ENCODE measurements at regions of chr19 and their contacts with region 1.

Region 1: GRCh38 chr19:19663256-19664038 is at the start of gene ATP13A1:
- DNase-seq: peak; percentile 90
- ATAC-seq: peak; percentile 78
- H3K4me3 Mint-ChIP-seq: peak within 1 kb of the TSS; percentile 92
- H3K27ac Mint-ChIP-seq: peak within 1 kb of the TSS; percentile 98
- H3K4me1 Mint-ChIP-seq: peaks cover 44% of the 10 kb centered on the region
- H3K27me3 Mint-ChIP-seq: no peaks in the 10 kb centered on the region
- CTCF ChIP-seq: no peak
- total RNA-seq, gene ATP13A1: 125 and 135 TPM in 2 replicates

Region 2: GRCh38 chr19:19063183-19064097 is 600.0 kb before region 1 on chr19 and contains the start of gene SLC25A42:
- CTCF ChIA-PET with region 1: no interaction called
- POLR2A ChIA-PET with region 1: no interaction called
- intact Hi-C with region 1: loop called (anchors 10 kb)
- DNase-seq: peak; percentile 96
- ATAC-seq: peak; percentile 89
- H3K4me3 Mint-ChIP-seq: peak within 1 kb of the TSS; percentile 88
- H3K27ac Mint-ChIP-seq: peak within 1 kb of the TSS; percentile 89
- H3K4me1 Mint-ChIP-seq: peaks cover 52% of the 10 kb centered on the region
- H3K27me3 Mint-ChIP-seq: no peaks in the 10 kb centered on the region
- CTCF ChIP-seq: no peak
- total RNA-seq, gene SLC25A42: 14.2 and 17.5 TPM in 2 replicates

Region 3: DNA sequence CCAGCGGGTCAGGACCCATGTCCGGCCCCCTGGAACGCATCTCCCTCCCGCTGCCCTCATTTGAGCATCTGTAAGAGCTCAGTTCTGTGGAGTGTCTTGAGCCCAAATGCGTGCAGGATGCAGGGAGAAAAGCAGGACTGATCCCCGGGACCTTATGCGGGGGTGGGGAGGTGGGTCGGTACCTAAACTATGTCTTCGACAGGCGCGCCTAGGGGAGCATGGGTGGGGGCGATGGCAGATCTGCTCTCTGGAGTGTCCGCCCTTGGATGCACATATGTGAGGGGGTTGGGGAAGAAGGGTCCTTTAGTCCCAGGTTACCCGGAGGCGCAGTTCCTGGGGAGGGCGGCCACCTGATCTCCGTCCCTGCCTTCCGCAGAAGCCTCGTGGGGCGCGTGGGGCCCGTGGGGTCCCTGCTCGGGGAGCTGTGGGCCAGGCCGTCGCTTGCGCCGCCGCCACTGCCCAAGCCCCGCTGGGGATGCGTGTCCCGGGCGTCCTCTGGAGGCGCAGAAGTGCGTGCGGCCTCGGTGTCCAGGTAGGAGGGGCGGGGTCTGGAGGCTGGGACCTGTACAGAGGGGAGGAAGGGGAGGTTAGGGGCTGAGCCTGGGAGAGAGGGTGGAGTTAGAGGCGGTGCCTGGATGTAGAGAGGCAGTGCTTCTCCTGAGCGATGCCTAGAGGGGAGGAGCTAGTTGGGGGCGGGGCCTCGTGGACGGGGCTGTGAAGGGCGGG is 122.6 kb before region 1 on chr19:
- CTCF ChIA-PET with region 1: no interaction called
- POLR2A ChIA-PET with region 1: no interaction called
- intact Hi-C with region 1: no loop called
- DNase-seq: peak; percentile 55
- ATAC-seq: peak; percentile 78
- H3K4me3 Mint-ChIP-seq: peak overlapping the region; percentile 68
- H3K27ac Mint-ChIP-seq: no peak overlapping the region
- H3K4me1 Mint-ChIP-seq: peaks cover 28% of the 10 kb centered on the region
- H3K27me3 Mint-ChIP-seq: peaks cover 20% of the 10 kb centered on the region
- CTCF ChIP-seq: no peak

Region 4: DNA sequence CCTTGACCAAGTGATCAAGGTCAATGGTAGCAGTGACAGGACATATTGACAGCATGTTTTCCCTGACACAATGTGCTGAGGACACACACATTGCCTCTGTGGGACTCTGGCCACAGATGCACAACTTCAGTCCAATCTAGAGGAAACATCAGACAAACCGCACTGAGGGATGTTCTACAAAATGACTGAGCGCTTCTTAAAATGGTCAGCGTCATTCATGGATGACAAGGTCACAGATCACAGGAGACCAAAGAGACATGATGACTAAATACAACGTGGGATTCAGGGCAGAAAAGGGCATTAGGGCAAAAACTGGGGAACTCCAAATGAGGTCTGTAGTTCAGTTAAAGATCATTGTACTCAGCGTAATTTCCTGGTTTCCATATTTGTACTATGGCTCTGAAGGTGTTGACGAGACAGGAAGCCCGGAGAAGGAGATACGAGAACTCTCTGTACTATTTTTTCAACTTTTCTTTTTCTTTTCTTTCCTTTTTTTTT is 65.6 kb before region 1 on chr19:
- CTCF ChIA-PET with region 1: no interaction called
- POLR2A ChIA-PET with region 1: interaction called, 5 read pairs
- intact Hi-C with region 1: loop called (anchors 2 kb)
- DNase-seq: no peak
- ATAC-seq: peak; percentile 80
- H3K4me3 Mint-ChIP-seq: peak overlapping the region; percentile 62
- H3K27ac Mint-ChIP-seq: peak overlapping the region; percentile 89
- H3K4me1 Mint-ChIP-seq: peaks cover 67% of the 10 kb centered on the region
- H3K27me3 Mint-ChIP-seq: no peaks in the 10 kb centered on the region
- CTCF ChIP-seq: no peak

Region 5: DNA sequence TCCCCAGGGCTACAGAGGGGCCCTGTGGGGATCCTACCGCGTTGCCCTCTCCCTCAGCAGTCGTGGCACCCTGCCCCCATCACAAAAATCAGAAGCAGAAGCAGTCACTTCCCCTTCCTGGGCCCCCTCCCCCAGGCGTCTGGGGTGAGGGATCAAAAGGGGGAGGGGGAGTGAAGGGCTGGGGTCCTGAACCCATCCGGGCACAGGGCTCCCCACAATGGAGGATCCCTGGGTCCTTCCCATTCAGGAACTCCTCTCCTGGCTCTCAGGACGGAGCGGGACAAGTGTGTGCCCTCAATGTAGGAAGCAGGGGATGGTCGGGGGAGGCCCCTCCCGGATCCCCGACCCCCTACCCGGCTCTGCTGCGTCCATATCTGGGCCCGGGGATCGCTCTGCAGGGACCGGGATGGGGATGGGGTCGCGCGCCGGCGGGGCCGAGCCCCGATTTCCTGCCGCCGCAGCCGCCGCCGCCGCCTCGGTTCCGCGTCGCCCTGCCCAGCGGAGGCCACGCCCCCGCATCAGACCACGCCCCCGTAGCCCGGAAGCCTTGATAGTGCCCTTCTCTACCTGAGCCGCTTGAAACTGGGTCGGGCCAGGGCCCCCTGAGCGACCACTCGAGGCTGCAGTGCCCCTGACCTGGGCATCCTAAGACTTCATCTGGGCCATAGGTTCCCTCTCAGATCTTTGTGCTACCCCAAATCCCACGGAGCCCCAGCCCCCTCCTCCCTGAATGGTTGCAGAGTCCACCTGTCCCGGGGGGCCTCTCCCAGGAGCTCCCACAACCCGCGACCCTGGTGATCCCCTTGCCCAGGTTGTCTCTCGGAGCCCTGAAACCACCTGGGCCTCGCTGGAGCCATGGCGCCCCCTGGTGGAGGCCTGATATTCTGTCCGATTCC is 20.0 kb before region 1 on chr19 and contains the start of gene GMIP:
- CTCF ChIA-PET with region 1: interaction called, 6 read pairs
- POLR2A ChIA-PET with region 1: interaction called, 12 read pairs
- intact Hi-C with region 1: loop called (anchors 1 kb)
- DNase-seq: peak; percentile 89
- ATAC-seq: peak; percentile 89
- H3K4me3 Mint-ChIP-seq: peak within 1 kb of the TSS; percentile 99
- H3K27ac Mint-ChIP-seq: peak within 1 kb of the TSS; percentile 96
- H3K4me1 Mint-ChIP-seq: peaks cover 19% of the 10 kb centered on the region
- H3K27me3 Mint-ChIP-seq: no peaks in the 10 kb centered on the region
- CTCF ChIP-seq: no peak
- total RNA-seq, gene GMIP: 129 and 130 TPM in 2 replicates

Region 6: DNA sequence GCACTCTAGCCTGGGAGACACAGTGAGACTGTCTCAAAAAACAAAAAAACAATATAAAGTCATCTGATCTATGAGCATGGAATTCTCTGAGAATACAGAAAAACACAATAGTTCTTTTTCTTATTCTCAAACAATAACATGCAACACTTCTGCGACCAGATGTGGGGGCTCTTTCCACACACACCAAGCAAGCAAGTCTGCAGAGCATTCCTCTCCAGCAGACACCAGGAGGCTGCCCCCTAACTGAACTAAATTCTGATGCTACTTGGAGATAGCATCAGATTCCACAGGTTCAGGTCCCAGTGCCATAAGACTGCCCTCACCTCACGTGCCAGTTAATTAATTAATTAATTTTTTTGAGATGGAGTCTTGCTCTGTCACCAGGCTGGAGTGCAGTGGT is 32.9 kb after region 1 on chr19:
- CTCF ChIA-PET with region 1: no interaction called
- POLR2A ChIA-PET with region 1: no interaction called
- intact Hi-C with region 1: no loop called
- DNase-seq: no peak
- ATAC-seq: no peak
- H3K4me3 Mint-ChIP-seq: no peak overlapping the region
- H3K27ac Mint-ChIP-seq: no peak overlapping the region
- H3K4me1 Mint-ChIP-seq: no peaks in the 10 kb centered on the region
- H3K27me3 Mint-ChIP-seq: no peaks in the 10 kb centered on the region
- CTCF ChIP-seq: no peak

Region 7: DNA sequence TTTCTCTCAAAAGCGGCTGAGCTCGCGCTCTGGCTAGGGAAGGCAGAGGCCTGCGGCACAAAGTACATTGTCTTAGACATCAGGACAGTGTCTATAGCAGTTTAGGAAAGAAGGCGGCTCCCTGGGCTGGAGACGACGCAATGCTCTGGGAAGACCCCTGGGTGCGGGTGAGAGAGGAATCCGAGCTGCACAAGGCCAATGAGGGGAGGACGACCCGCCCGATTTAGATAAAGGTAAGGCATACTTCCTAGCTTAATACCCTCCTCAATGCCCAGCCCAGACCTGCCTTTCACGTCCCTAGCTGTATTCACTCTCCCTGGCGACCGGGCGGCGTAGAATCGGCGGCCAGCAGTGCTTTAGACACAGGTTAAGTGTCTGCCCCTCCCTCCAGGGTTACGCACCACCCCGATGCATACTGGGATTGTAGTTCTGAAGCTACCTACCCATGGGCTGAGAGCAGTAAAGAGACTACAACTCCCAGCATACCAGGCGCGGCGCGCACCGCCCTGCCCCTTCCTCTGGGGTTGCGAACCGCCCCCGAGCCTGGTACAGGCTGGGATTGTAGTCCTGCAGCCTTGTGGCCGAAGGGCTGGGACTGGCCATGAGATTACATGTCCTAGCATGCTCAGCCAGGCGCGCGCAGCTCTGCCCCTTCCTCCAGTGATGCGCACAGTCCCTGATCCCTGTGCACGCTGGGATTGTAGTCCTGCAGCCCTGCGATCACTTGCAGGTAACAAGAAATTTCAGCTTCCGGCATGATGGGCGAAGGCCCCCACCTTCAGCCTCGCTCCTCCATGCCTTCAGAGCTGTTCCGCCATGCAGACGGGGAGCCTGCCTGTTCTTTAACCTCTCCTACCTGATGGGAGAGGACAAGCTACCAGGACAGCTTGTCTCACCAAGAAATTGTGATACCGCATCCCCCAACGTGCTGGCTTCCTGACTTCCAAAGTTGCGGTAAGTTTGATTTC is 112.9 kb after region 1 on chr19:
- CTCF ChIA-PET with region 1: no interaction called
- POLR2A ChIA-PET with region 1: interaction called, 29 read pairs
- intact Hi-C with region 1: loop called (anchors 1 kb)
- DNase-seq: peak; percentile 84
- ATAC-seq: peak; percentile 99
- H3K4me3 Mint-ChIP-seq: peak overlapping the region; percentile 97
- H3K27ac Mint-ChIP-seq: peak overlapping the region; percentile 88
- H3K4me1 Mint-ChIP-seq: peaks cover 45% of the 10 kb centered on the region
- H3K27me3 Mint-ChIP-seq: no peaks in the 10 kb centered on the region
- CTCF ChIP-seq: no peak

Region 8: GRCh38 chr19:19900729-19901444 is 237.4 kb after region 1 on chr19 and contains the start of gene ZNF93:
- CTCF ChIA-PET with region 1: no interaction called
- POLR2A ChIA-PET with region 1: interaction called, 26 read pairs
- intact Hi-C with region 1: loop called (anchors 1 kb)
- DNase-seq: peak; percentile 74
- ATAC-seq: peak; percentile 97
- H3K4me3 Mint-ChIP-seq: peak within 1 kb of the TSS; percentile 98
- H3K27ac Mint-ChIP-seq: peak within 1 kb of the TSS; percentile 91
- H3K4me1 Mint-ChIP-seq: peaks cover 34% of the 10 kb centered on the region
- H3K27me3 Mint-ChIP-seq: no peaks in the 10 kb centered on the region
- CTCF ChIP-seq: no peak
- total RNA-seq, gene ZNF93: 13.5 and 14.9 TPM in 2 replicates

Region 9: DNA sequence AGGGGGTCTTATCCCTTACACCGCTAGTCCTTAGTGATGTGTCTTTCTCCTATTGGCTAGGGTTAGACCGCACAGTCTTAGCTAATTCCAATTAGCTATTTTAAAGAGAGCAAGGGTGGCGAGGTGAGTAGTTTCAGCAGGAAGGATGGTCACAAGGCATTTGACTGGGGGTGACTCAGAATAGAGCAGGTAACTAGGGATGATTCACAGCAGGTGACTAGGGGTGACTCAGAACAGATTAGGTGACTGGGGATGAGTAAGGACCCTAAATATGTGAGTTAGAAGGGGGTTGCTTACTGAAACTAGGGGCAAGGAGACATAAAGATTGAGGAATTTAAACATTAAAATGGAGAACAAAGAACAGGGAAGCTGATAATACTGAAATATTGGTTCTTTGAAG is 1176.9 kb after region 1 on chr19:
- CTCF ChIA-PET with region 1: no interaction called
- POLR2A ChIA-PET with region 1: no interaction called
- intact Hi-C with region 1: no loop called
- DNase-seq: no peak
- ATAC-seq: no peak
- H3K4me3 Mint-ChIP-seq: no peak overlapping the region
- H3K27ac Mint-ChIP-seq: no peak overlapping the region
- H3K4me1 Mint-ChIP-seq: no peaks in the 10 kb centered on the region
- H3K27me3 Mint-ChIP-seq: no peaks in the 10 kb centered on the region
- CTCF ChIP-seq: no peak

Measured in activated B cell treated with CpG ODN at 0.5 μM for 24 hours (primary cell).